H1 (cell line): ENCODE measurements at regions of chr7 and their contacts with region 1.

Region 1: GRCh38 chr7:24069751-24070150 is 214.2 kb upstream of the NPY start:
- DNase-seq: no peak
- H3K4me3 ChIP-seq: no peak overlapping the region
- H3K27ac ChIP-seq: no peak overlapping the region
- H3K4me1 ChIP-seq: no peaks in the 10 kb centered on the region
- H3K27me3 ChIP-seq: no peaks in the 10 kb centered on the region
- CTCF ChIP-seq: no peak
- EP300 ChIP-seq: no peak
- POLR2A ChIP-seq: no peak
- RAD21 ChIP-seq: no peak

Region 2: DNA sequence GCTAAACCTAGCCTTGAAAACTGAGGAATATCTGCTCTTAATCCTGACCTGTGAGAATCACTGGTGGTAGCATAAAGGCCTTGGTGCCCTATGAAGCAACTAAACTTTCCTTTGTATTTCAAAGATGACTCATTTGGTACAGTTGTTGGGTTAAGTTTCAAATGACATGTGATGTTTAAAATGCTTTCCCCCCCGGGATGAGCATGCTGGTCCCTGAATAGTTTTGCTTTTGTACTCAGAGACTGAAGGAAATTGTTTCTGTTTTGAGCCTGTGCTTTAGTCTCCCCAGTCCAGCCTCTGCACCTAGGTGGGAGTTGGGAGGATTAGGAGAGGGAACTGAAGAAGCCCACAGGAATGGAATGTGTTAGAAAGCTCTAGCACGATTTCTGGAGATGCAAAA is 44.7 kb before region 1 on chr7:
- CTCF ChIA-PET with region 1: no interaction called
- POLR2A ChIA-PET with region 1: no interaction called
- DNase-seq: no peak
- H3K4me3 ChIP-seq: no peak overlapping the region
- H3K27ac ChIP-seq: no peak overlapping the region
- H3K4me1 ChIP-seq: peaks cover 0 to 14% (median 4%) of the 10 kb centered on the region in 4 experiments; a peak in 3 of 7 replicates
- H3K27me3 ChIP-seq: no peaks in the 10 kb centered on the region
- CTCF ChIP-seq: no peak
- EP300 ChIP-seq: no peak
- POLR2A ChIP-seq: no peak
- RAD21 ChIP-seq: no peak

Region 3: GRCh38 chr7:24057243-24057642 is 12.5 kb before region 1 on chr7:
- CTCF ChIA-PET with region 1: interaction called, 12 read pairs
- POLR2A ChIA-PET with region 1: interaction called, 4 read pairs
- DNase-seq: no peak
- H3K4me3 ChIP-seq: no peak overlapping the region
- H3K27ac ChIP-seq: no peak overlapping the region
- H3K4me1 ChIP-seq: peaks cover 0 to 2% (median 0%) of the 10 kb centered on the region in 4 experiments; a peak in 3 of 7 replicates
- H3K27me3 ChIP-seq: peaks cover 0 to 3% (median 0%) of the 10 kb centered on the region in 4 experiments; a peak in 1 of 7 replicates
- CTCF ChIP-seq: peak in 1 of 3 experiments; percentile 30; a peak in 1 of 4 replicates
- EP300 ChIP-seq: no peak
- POLR2A ChIP-seq: no peak
- RAD21 ChIP-seq: no peak

Region 4: DNA sequence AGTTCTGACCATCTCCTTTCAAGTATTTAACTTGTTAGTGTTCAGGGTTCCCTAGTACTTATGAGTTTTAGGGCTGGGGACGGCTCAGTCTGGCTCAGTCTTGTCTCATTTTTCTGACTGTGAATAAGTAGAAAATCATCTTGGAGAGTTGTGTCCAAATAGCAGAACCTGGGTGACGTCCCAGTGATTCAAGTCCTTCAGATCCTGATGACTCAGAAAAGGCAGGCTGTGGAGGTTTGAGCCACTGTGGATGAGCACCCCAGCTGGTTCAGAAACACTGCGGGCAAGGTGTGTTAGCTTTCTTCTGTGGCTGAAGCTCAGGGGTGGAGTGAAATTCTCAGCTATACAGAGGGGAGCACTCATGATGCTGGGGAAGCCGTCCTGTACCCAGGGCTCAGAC is 59.8 kb after region 1 on chr7:
- CTCF ChIA-PET with region 1: no interaction called
- POLR2A ChIA-PET with region 1: no interaction called
- DNase-seq: no peak
- H3K4me3 ChIP-seq: no peak overlapping the region
- H3K27ac ChIP-seq: no peak overlapping the region
- H3K4me1 ChIP-seq: no peaks in the 10 kb centered on the region
- H3K27me3 ChIP-seq: no peaks in the 10 kb centered on the region
- CTCF ChIP-seq: no peak
- EP300 ChIP-seq: no peak
- POLR2A ChIP-seq: no peak
- RAD21 ChIP-seq: no peak